MCF 10A (cell line): ENCODE measurements at regions of chr17 and their contacts with region 1.

Region 1: DNA sequence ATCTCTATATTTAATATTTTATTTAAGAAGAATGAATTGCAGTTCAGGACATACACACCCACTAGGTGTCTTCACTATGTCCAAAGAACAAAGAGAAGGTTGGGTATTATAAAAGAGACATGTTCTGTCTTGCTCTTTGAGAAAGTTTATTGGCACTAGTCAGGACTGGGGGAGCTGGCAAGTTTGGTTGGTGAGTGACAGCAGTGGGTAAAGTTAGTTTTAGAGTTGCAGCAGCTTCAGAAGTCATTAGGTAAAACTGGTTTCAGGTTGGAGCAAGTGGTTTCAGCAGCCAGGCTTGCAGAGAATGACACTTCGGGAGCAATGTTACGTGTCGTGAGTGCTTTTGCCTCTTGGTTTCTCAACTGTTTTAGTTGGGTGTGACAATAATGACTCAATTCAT is 142.2 kb upstream of the HS3ST3A1 start:
- DNase-seq: peak; percentile 35
- H3K4me3 Mint-ChIP-seq: no peak overlapping the region
- H3K27ac Mint-ChIP-seq: peak overlapping the region; percentile 44
- H3K4me1 Mint-ChIP-seq: peaks cover 8% of the 10 kb centered on the region
- H3K27me3 Mint-ChIP-seq: no peaks in the 10 kb centered on the region
- CTCF ChIP-seq: no peak

Region 2: DNA sequence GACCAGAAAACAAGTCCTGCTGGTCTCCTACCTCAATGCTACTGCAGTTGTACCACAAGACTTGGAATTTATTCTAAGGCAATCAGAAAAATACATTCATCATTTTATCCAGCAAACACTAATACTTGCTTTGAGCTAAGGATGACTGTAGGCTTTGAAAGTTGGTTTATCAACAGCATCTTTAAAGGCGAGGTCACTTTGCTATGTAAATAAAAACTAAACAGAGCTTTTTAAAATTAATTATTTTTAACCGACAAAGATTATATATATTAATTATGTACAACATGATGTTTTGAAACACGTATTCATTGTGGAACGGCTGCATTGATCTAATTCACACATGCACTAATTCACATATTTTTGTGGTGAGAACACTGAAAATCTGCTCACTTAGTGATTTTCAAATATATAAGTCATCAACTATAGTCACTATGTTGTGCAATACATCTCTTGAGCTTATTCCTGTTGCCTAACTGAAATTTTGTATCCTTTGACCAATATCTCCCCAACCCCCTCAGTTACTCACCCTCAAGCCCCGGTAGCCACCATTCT is 16.3 kb before region 1 on chr17:
- CTCF ChIA-PET with region 1: no interaction called
- POLR2A ChIA-PET with region 1: interaction called, 11 read pairs
- intact Hi-C with region 1: no loop called
- DNase-seq: peak; percentile 75
- H3K4me3 Mint-ChIP-seq: no peak overlapping the region
- H3K27ac Mint-ChIP-seq: peak overlapping the region; percentile 68
- H3K4me1 Mint-ChIP-seq: peaks cover 27% of the 10 kb centered on the region
- H3K27me3 Mint-ChIP-seq: no peaks in the 10 kb centered on the region
- CTCF ChIP-seq: no peak